PC-9 (cell line): ENCODE measurements at regions of chr19 and their contacts with region 1.

Region 1: DNA sequence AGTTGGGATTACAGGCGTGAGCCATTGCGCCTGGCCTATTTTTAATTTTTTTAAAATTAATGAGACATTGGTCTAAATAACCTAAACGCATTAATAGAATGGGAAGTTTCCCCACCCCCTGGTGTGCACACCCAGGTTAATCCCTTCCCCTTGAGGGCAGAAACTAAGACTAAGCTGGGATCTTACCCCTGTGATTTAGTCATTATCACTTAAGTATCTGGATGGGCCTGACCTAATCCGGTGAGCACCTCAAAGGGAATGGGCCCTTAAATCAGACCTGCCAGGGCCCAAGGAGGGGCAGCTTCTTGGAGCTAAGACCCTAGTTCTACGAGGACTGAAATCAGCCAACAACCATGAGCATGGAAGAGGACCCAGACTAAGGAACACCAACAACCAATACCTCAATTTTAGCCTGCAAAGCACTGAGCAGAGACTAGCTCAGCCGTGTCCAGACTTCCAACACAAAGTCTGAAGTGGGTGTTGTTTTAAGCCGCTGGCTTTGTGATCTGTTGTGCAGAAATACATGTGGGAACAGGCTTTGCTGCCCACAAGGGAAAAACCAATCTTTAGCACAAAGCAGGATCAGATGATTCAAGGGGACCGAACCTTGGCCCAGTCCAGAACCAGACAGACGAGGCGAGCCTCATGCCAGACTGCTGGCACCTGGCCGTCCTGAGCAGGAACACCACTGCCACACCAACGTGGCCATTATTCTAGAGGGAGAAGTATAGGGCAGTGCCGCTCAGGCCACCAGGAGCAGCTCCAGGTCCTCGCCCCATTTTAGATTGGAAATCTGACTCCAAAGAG is 7.1 kb downstream of the UBE2S start:
- DNase-seq: no peak
- H3K4me3 ChIP-seq: no peak overlapping the region
- H3K27ac ChIP-seq: 0 out of 2 replicates have a peak overlapping the region, but pooled peaks have one; percentile 13
- H3K4me1 ChIP-seq: peaks cover 3% of the 10 kb centered on the region
- H3K27me3 ChIP-seq: no peaks in the 10 kb centered on the region
- CTCF ChIP-seq: no peak

Region 2: DNA sequence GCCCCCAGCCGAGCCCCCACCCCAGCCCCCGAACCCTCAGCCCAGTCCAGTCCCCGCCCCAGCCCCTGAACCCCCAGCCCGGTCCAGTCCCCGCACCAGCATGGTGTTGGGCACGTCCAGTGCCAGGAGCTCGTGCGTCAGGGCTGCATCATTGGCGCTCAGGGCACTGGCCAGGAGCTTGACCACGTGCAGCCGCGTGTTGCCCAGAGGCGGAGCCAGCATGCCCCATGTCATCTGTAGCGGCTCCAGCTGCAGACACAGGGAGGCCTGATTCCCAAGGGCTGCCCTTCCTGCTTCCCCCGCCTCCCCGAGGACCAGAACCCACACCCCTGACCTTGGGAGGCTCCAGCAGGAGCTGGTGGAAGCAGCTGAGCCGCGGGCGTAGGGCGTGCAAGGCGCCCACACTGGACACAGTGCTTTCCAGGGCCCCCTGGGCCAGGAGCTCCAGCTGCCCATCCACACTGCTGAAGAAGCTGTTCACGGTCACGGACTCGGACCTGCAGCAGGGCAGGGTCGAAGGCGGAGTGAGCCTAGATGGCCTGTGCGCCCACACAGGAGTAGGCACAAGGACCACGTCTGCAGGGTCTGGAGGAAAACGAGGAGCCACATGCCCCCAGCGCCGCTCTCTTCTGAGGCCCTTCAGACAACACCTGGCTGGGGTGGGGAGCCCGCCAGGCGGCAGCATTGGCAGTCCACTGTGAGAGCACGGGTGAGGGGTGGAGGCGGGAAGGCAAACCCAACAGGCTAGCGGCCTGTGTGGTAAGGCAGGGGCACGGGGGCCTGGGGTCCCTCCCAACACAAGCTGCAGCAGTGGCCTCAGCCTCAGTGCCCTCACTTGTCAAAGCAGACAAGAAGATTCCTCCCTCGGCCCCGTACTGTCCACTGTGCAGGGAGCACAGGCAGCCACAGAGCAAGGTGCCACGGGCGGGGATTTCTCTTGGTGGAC is 159.1 kb before region 1 on chr19:
- CTCF ChIA-PET with region 1: interaction called, 13 read pairs
- POLR2A ChIA-PET with region 1: no interaction called
- intact Hi-C with region 1: no loop called
- DNase-seq: no peak
- H3K4me3 ChIP-seq: no peak overlapping the region
- H3K27ac ChIP-seq: no peak overlapping the region
- H3K4me1 ChIP-seq: no peaks in the 10 kb centered on the region
- H3K27me3 ChIP-seq: no peaks in the 10 kb centered on the region
- CTCF ChIP-seq: no peak

Region 3: DNA sequence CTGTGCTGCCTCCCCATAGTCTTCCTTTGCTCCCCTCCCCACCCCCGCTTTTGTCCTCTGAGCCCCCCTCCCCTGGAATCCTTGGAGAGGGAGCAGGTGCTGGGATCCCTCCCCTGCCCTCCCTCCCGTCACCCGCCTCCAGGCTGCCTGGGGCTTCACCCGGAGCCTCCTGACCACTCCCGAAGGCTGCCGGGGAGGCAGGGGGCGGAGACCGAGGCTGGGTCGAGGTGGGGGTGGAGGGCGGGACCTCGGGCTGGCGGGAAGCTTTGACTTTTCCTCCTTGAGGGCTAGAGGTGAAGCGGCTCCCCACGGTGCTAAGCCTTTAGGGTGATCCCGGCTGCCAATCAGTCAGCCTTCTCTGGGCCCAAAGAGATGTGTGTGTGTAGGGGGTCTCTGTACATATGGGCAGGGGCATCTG is 59.3 kb before region 1 on chr19:
- CTCF ChIA-PET with region 1: no interaction called
- POLR2A ChIA-PET with region 1: no interaction called
- intact Hi-C with region 1: no loop called
- DNase-seq: peak; percentile 57 to 90
- H3K4me3 ChIP-seq: peak overlapping the region; percentile 86
- H3K27ac ChIP-seq: no peak overlapping the region
- H3K4me1 ChIP-seq: peaks cover 24% of the 10 kb centered on the region
- H3K27me3 ChIP-seq: no peaks in the 10 kb centered on the region
- CTCF ChIP-seq: no peak

Region 4: DNA sequence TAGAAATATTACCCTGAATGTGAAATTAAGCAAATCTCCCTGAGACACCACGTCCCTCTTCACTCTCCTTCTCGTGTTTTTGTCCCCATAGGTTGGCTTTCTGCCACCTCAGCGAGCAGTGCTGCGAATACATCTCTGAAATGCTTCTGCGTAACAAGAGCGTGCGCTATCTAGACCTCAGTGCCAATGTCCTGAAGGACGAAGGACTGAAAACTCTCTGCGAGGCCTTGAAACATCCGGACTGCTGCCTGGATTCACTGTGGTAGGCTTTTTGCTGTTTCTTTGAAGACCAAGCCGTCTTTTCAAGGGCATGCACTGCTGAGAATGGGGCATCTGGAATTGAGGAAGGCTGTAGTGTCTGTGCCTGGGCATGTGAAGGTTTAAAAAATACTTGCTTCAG is 470.3 kb after region 1 on chr19:
- CTCF ChIA-PET with region 1: no interaction called
- POLR2A ChIA-PET with region 1: no interaction called
- intact Hi-C with region 1: no loop called
- DNase-seq: no peak
- H3K4me3 ChIP-seq: no peak overlapping the region
- H3K27ac ChIP-seq: no peak overlapping the region
- H3K4me1 ChIP-seq: no peaks in the 10 kb centered on the region
- H3K27me3 ChIP-seq: peaks cover 98% of the 10 kb centered on the region
- CTCF ChIP-seq: no peak